ENCODE measurements at regions of chr1 and their contacts with region 1.

Region 1: GRCh38 chr1:212791676-212792395 is at the starts of genes NSL1 and TATDN3:
- DNase-seq: peak; percentile 45 to 92
- H3K4me3 ChIP-seq: peak within 1 kb of the TSS; percentile 71 to 94
- H3K27ac ChIP-seq: peak within 1 kb of the TSS; percentile 89 to 93
- H3K4me1 ChIP-seq: peaks cover 0 to 17% of the 10 kb centered on the region in 2 donors
- H3K27me3 ChIP-seq: no peaks in the 10 kb centered on the region
- CTCF ChIP-seq: no peak
- total RNA-seq, gene NSL1: 69.1 TPM
- total RNA-seq, gene TATDN3: 2.7 TPM

Region 2: DNA sequence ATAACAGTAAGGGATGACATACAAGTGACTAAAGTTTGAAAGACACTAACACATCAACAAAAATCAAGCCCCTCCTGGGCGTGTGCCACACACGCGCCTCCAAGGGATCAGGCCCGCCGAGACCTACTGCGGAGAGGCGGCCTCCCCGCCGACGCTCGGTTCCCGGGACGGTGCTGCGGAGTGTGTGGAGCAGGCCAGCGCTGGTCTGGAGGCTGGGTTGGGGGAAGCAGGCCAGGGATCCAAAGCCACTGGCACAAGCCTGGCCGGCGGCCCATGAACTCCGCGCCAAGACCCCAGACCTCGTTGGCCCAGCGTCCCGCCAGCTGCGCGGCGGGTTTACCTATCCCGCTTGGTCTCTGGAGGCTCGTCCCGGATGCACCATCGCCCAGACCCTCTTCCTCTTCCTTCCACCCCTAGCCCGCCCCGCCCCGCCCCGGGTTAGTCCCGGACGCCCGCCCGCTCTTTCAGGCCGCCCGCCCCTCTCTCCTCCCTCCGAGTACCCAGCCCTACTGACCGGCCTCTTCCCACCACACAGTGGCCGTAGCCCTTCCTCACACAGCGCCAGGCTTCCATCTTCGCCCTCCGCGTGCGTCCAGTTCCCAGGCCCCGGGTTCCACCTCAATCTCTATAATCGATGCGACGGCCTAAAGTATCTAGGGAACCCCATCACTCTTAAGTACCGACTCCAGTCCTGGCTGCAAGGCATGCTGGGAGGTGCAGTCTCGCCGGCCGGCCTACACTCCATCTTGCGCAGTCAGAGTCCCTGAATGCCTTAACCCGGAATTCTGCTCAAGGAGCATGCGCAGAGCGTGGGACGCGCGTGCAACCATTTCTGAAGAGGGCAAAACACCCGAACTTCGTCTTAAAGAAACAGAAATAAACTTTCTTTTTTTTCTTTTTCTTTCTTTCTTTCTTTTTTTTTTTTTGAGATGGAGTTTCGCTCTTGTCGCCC is 223.5 kb after region 1 on chr1 and contains the start of gene ANGEL2:
- intact Hi-C with region 1: loop called (anchors 5 kb)
- DNase-seq: peak; percentile 90 to 98
- H3K4me3 ChIP-seq: peak within 1 kb of the TSS; percentile 74 to 81
- H3K27ac ChIP-seq: peak within 1 kb of the TSS; percentile 88 to 91
- H3K4me1 ChIP-seq: peaks cover 5 to 12% of the 10 kb centered on the region in 2 donors
- H3K27me3 ChIP-seq: no peaks in the 10 kb centered on the region
- CTCF ChIP-seq: no peak
- total RNA-seq, gene ANGEL2: 36.7 TPM

Region 3: DNA sequence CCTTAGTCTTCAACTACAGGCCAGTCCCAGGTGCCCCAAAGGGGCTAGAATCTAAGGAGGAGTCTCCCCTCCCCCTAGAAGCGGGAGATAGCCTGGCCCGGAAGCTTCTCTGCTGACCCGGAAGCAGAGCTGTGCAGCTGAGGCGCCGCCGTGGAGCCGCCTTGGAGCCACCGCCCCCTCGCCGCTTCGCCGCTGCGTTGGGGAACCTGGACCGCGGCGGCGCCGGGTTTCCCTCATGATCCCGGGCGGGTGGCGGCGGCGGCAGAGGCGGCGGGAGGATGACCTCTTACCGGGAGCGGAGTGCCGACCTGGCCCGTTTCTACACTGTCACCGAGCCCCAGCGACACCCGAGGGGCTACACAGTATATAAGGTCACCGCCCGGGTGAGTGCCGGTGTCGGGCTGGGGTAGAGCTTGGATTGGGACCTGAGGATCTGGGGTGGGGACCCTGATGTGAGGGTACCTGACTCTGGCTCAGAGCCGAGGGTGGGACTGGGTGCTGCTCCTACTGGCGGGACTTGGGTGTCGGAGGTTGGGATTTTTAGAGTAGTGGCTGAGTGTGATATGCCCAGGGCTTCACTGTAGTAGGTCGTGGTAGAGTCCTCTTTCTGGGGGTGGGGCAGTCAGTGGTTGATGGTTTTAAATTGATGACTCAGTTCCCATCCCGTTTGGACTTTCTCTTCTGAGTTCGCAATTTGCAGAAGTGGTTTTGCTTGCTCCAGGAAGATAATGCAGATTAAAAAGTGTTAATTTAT is 259.5 kb after region 1 on chr1 and contains the start of gene RPS6KC1:
- intact Hi-C with region 1: loop called (anchors 5 kb)
- DNase-seq: peak; percentile 10 to 88
- H3K4me3 ChIP-seq: peak within 1 kb of the TSS; percentile 75 to 92
- H3K27ac ChIP-seq: peak within 1 kb of the TSS; percentile 67 to 77
- H3K4me1 ChIP-seq: peaks cover 6 to 11% of the 10 kb centered on the region in 2 donors
- H3K27me3 ChIP-seq: no peaks in the 10 kb centered on the region
- CTCF ChIP-seq: no peak
- total RNA-seq, gene RPS6KC1: 21.0 TPM

Measured in ascending aorta (tissue), 2 donors.